GM12878 (cell line): ENCODE measurements at regions of chr10 and their contacts with region 1.

Region 1: DNA sequence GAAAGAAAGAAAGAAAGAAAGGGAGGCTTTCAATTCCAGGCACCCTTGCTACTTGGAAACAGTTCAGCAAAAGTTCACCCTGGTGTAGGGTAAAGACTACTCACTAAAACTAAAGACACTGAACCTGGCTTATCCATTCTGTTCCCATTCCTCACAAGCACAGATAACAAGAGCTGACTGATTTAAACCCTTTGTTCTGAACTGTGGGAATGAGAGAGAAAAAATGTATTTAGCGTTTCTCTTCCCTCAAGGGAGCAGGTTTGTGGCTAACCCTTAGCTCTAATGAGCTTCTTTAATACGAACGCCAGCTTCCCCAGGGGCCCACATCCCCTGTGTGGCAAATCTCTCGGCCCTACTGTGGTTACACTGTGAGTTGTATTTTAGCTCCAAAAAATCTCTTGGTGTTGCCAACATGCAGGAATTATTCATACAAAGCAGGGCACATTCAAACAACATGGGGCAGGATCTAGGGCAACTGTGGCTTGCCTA is 23.3 kb downstream of the PRTFDC1 start:
- DNase-seq: peak; percentile 79
- ATAC-seq: peak; percentile 88
- H3K4me3 ChIP-seq: no peak overlapping the region
- H3K27ac ChIP-seq: no peak overlapping the region
- H3K4me1 ChIP-seq: peaks cover 6% of the 10 kb centered on the region
- H3K27me3 ChIP-seq: no peaks in the 10 kb centered on the region
- CTCF ChIP-seq: no peak
- EP300 ChIP-seq: peak; percentile 55 to 66; a peak in 1 of 4 replicates
- POLR2A ChIP-seq: no peak
- RAD21 ChIP-seq: no peak

Region 2: DNA sequence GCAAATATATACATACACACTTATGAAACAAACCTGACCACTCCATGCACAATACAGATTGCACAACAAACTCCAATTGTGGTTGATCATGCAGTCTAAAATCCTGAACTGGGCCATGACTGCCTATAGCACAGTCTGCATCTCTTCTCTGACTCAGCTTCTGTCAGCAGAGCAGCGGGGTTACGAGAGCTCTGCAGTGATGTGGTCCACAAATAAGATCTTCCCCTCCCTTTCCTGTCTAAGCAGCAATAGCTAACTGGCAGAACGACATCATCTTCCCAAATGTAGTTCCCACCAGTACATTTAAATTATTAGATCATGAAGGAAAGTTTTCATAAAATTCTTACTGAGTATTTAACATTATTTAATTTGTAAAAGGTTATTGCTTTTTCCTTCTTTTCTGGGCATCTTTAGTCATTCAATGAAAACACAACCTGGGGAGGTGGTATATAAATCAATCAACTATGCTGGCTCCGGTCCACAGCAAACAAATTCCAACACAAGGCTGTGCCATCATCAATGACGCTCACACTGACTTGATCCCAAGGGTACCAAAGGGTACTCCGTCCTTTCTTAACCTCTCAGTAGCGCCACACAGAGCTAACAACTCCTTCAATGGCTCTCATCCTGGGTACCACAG is 222.5 kb before region 1 on chr10:
- CTCF ChIA-PET with region 1: interaction called, 5 read pairs
- POLR2A ChIA-PET with region 1: interaction called, 3 read pairs
- RAD21 ChIA-PET with region 1: interaction called, 7 read pairs
- SMC1A ChIA-PET with region 1: interaction called, 23 read pairs
- in situ Hi-C with region 1: no loop called
- intact Hi-C with region 1: no loop called
- DNase-seq: no peak
- ATAC-seq: peak; percentile 81
- H3K4me3 ChIP-seq: no peak overlapping the region
- H3K27ac ChIP-seq: no peak overlapping the region
- H3K4me1 ChIP-seq: peaks cover 9% of the 10 kb centered on the region; the same call in 1 of the 2 replicates
- H3K27me3 ChIP-seq: no peaks in the 10 kb centered on the region
- CTCF ChIP-seq: no peak
- EP300 ChIP-seq: no peak
- POLR2A ChIP-seq: no peak
- RAD21 ChIP-seq: no peak

Region 3: DNA sequence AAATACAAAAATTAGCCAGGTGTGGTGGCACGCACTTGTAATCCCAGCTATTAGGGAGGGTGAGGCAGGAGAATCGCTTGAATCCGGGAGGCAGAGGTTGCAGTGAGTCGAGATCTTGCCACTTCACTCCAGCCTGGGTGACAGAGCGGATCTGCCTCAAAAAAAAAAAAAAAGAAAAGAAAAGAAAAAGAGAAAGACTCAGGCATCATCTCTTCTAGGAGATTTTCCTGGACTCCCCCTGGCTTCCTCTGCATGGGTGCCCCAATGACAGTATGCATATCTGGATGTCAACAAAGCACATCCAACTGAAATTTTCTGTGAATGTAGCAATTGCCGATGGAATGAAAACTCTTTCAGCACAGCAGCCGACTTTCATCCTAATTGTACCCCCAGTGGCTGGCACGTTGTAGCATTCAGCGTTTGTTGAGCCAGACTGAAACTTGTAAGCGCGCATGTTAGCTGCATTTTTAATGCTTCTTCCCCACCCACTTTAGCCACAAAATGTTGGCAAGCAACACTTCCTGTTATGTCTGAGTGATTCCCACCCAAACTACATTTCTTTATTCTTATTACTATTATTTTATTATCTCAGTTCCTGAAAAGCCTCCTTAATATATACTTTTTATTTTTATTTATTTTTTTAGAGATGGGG is 46.9 kb before region 1 on chr10:
- CTCF ChIA-PET with region 1: interaction called, 3 read pairs
- POLR2A ChIA-PET with region 1: interaction called, 4 read pairs
- RAD21 ChIA-PET with region 1: interaction called, 23 read pairs
- SMC1A ChIA-PET with region 1: interaction called, 33 read pairs
- in situ Hi-C with region 1: no loop called
- intact Hi-C with region 1: loop called (anchors 5 kb)
- DNase-seq: peak; percentile 53
- ATAC-seq: peak; percentile 77
- H3K4me3 ChIP-seq: no peak overlapping the region
- H3K27ac ChIP-seq: no peak overlapping the region
- H3K4me1 ChIP-seq: no peaks in the 10 kb centered on the region
- H3K27me3 ChIP-seq: no peaks in the 10 kb centered on the region
- CTCF ChIP-seq: no peak
- EP300 ChIP-seq: no peak
- POLR2A ChIP-seq: no peak
- RAD21 ChIP-seq: no peak

Region 4: DNA sequence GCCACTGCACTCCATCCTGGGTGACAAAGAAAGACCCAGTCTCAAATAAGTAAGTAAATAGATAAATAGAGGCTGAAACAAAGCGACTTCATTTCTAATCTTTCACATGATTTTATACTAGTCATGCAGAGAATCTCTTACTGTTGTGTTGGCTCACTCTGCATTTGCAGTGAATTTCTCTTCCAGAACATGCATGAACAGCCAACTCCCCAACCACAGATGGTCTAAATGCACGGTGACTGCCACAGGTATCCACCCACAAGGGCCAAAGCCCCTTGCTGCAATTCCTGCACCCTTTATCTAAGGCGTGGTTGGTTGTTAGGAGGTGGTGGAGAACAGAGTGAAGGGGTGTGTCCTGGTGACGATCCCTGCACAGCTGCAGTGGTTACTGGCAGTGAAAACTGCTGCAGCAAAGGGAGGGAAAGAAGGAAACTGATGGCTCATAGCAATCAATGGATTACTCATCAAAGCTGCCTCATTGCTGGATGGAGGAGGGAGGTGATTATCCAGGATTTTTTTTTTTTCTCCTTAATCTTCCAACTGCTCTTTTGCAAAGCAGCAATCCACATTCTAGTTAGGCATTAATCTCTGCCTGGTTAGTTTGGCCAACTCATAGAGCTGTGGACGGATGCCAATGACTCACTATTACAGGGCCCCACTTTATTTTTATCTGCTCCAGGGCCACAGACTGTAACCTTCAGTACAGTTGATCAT is 27.3 kb before region 1 on chr10:
- CTCF ChIA-PET with region 1: interaction called, 52 read pairs
- POLR2A ChIA-PET with region 1: interaction called, 44 read pairs
- RAD21 ChIA-PET with region 1: interaction called, 193 read pairs
- SMC1A ChIA-PET with region 1: interaction called, 338 read pairs
- in situ Hi-C with region 1: no loop called
- intact Hi-C with region 1: loop called (anchors 1 kb)
- DNase-seq: peak; percentile 43
- ATAC-seq: peak; percentile 66
- H3K4me3 ChIP-seq: peak overlapping the region; percentile 28; the same call in 1 of the 2 replicates
- H3K27ac ChIP-seq: peak overlapping the region; percentile 59
- H3K4me1 ChIP-seq: peaks cover 20% of the 10 kb centered on the region
- H3K27me3 ChIP-seq: no peaks in the 10 kb centered on the region
- CTCF ChIP-seq: no peak
- EP300 ChIP-seq: 0 out of 4 replicates have a peak, but pooled peaks of 1 of the 2 experiments have one; percentile 31
- POLR2A ChIP-seq: no peak
- RAD21 ChIP-seq: no peak

Region 5: GRCh38 chr10:24947304-24948097 is 18.4 kb after region 1 on chr10:
- CTCF ChIA-PET with region 1: interaction called, 56 read pairs
- POLR2A ChIA-PET with region 1: interaction called, 103 read pairs
- RAD21 ChIA-PET with region 1: interaction called, 274 read pairs
- SMC1A ChIA-PET with region 1: interaction called, 236 read pairs
- in situ Hi-C with region 1: no loop called
- intact Hi-C with region 1: loop called (anchors 1 kb)
- DNase-seq: peak; percentile 51
- ATAC-seq: peak; percentile 79
- H3K4me3 ChIP-seq: no peak overlapping the region
- H3K27ac ChIP-seq: no peak overlapping the region
- H3K4me1 ChIP-seq: peaks cover 3% of the 10 kb centered on the region; the same call in 1 of the 2 replicates
- H3K27me3 ChIP-seq: no peaks in the 10 kb centered on the region
- CTCF ChIP-seq: no peak
- EP300 ChIP-seq: peak; percentile 82 to 87; a peak in 3 of 4 replicates
- POLR2A ChIP-seq: no peak
- RAD21 ChIP-seq: no peak

Region 6: DNA sequence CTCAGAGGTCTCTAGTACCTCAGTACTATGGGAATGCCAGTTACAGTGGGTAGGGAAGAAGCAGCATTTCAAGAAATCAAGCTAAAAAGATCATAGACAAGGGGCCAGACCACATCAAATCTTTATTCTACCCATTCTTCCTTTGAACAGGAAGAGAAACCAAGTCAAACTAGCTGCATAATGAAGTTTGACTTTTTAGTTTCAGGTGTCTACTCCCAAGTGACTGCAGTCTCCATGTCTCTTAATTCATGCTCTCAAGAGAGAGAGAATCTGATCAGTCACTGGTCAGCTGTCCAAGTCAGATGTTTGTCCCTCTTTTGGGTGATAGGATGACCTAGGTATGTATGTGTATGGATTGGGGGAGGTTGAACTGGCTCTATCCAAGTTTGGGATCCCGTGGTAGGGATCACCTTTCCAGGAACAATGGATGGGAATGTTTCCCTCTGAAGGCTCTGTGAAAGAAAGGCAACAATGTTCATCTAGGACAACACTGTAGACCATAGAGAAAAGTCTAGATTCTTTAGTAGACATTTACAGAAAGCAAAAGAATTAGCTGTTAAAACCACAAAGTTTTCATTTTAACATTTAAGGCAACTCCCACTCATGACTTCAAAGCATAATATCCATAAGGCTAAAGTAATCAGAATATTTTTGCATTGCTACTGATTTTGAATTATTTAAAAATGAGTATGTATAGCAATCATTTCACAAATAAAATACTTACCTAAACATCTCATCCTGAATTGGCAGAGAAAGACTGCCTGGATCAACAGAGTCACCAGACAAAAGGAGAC is 53.4 kb after region 1 on chr10:
- CTCF ChIA-PET with region 1: interaction called, 6 read pairs
- POLR2A ChIA-PET with region 1: interaction called, 6 read pairs
- RAD21 ChIA-PET with region 1: interaction called, 30 read pairs
- SMC1A ChIA-PET with region 1: interaction called, 44 read pairs
- in situ Hi-C with region 1: no loop called
- intact Hi-C with region 1: no loop called
- DNase-seq: peak; percentile 42
- ATAC-seq: peak; percentile 31; the same call in 2 of the 3 replicates
- H3K4me3 ChIP-seq: no peak overlapping the region
- H3K27ac ChIP-seq: no peak overlapping the region
- H3K4me1 ChIP-seq: peaks cover 4% of the 10 kb centered on the region
- H3K27me3 ChIP-seq: no peaks in the 10 kb centered on the region
- CTCF ChIP-seq: no peak
- EP300 ChIP-seq: no peak
- POLR2A ChIP-seq: no peak
- RAD21 ChIP-seq: no peak

Region 7: DNA sequence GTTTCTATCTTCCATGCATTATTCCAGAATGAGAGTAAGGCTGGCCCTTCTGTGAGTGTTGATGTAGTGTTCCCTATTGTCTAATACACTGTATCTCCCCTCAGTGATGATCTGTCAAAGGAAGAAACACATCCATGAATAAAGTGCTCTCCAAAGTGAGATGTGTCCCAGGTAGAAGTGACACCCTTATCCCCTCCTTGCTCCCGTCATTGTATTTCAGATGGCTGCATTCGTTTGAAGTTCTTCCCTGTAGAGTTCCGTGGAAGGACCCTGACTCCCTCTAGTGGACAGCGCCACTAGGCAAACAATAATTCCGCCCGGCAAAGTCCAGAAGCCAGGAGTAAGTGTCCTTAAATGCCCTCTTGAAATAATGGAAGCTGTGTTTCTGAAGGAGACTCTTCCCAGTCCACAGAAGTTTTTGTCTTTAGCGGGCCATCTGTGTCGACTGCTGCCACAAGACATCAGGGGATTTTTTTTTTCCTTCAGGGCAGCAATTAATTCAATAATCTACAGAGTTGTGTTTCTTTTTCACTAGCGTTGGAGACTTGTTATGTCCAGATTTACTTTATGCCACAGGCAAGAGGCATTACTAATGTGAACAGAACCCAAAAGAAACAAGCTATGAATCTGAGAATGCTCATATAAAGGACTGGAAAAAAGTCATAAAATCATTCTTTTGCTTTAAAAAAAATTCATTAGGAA is 151.9 kb after region 1 on chr10:
- CTCF ChIA-PET with region 1: interaction called, 17 read pairs
- POLR2A ChIA-PET with region 1: interaction called, 3 read pairs
- RAD21 ChIA-PET with region 1: interaction called, 15 read pairs
- SMC1A ChIA-PET with region 1: interaction called, 25 read pairs
- in situ Hi-C with region 1: no loop called
- intact Hi-C with region 1: no loop called
- DNase-seq: peak; percentile 30
- ATAC-seq: peak; percentile 90
- H3K4me3 ChIP-seq: no peak overlapping the region
- H3K27ac ChIP-seq: no peak overlapping the region
- H3K4me1 ChIP-seq: peaks cover 4% of the 10 kb centered on the region; the same call in 1 of the 2 replicates
- H3K27me3 ChIP-seq: no peaks in the 10 kb centered on the region; a peak in 1 of 4 replicates
- CTCF ChIP-seq: peak; percentile 90 to 92 (median 91)
- EP300 ChIP-seq: no peak
- POLR2A ChIP-seq: no peak
- RAD21 ChIP-seq: peak; percentile 96

Region 8: GRCh38 chr10:25101461-25102146 is 172.5 kb after region 1 on chr10:
- CTCF ChIA-PET with region 1: no interaction called
- POLR2A ChIA-PET with region 1: no interaction called
- RAD21 ChIA-PET with region 1: no interaction called
- SMC1A ChIA-PET with region 1: no interaction called
- in situ Hi-C with region 1: no loop called
- intact Hi-C with region 1: no loop called
- DNase-seq: no peak
- ATAC-seq: no peak
- H3K4me3 ChIP-seq: no peak overlapping the region
- H3K27ac ChIP-seq: no peak overlapping the region
- H3K4me1 ChIP-seq: no peaks in the 10 kb centered on the region
- H3K27me3 ChIP-seq: no peaks in the 10 kb centered on the region; a peak in 1 of 4 replicates
- CTCF ChIP-seq: no peak
- EP300 ChIP-seq: no peak
- POLR2A ChIP-seq: no peak
- RAD21 ChIP-seq: no peak

Region 9: GRCh38 chr10:26310361-26310760 is 1381.3 kb after region 1 on chr10:
- CTCF ChIA-PET with region 1: no interaction called
- POLR2A ChIA-PET with region 1: no interaction called
- RAD21 ChIA-PET with region 1: no interaction called
- SMC1A ChIA-PET with region 1: no interaction called
- in situ Hi-C with region 1: no loop called
- intact Hi-C with region 1: no loop called
- DNase-seq: no peak
- ATAC-seq: peak; percentile 71
- H3K4me3 ChIP-seq: no peak overlapping the region
- H3K27ac ChIP-seq: no peak overlapping the region
- H3K4me1 ChIP-seq: no peaks in the 10 kb centered on the region
- H3K27me3 ChIP-seq: peaks cover 1 to 6% of the 10 kb centered on the region in 2 experiments; a peak in 3 of 4 replicates
- CTCF ChIP-seq: no peak
- EP300 ChIP-seq: no peak
- POLR2A ChIP-seq: no peak
- RAD21 ChIP-seq: no peak